ENCODE measurements at regions of chr11 and their contacts with region 1.

Region 1: GRCh38 chr11:67126986-67127385 is 7.9 kb downstream of the KDM2A start:
- DNase-seq: no peak
- H3K4me3 ChIP-seq: no peak overlapping the region
- H3K27ac ChIP-seq: no peak overlapping the region
- H3K4me1 ChIP-seq: peaks cover 21% of the 10 kb centered on the region
- H3K27me3 ChIP-seq: no peaks in the 10 kb centered on the region
- CTCF ChIP-seq: no peak

Region 2: DNA sequence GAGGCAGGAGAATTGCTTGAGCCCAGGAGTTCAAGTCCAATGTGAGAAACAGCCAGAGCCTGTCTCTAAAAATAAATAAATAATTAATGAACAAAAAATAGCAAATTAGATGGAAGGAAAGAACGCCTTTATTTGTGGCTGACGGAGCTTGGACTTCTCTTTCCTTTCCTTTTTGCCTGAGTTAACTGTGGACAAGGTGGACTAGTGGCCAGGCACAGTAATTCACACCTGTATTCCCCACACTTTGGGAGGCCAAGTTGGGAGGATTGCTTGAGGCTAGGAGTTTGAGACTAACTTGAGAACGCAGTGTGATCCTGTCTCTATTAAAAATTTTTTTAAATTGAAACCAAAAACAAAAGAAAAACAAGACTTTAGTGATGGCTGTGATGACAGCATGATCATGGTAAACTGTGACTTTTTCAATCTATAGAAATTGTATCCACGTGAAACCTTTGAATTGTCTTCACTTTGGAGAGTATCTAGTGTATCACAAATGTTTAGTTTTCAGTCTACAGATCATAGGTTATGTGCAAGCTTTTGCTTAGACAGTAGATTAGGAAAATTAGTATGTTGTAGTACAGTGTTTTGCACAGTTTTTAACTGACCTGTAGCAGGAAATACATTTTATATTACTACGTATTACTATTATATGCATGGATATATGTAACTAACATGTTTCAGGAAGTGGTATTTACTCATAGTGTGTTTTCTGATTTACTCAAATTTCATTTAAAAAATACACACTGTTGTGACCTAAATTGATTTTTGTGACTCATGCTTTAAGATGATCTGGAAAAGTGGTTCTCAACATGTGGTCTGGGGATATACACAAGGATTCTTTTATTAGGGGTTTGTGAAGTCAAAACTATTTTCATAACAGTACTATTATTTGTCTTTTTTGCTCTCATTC is 34.1 kb after region 1 on chr11:
- CTCF ChIA-PET with region 1: interaction called, 23 read pairs
- POLR2A ChIA-PET with region 1: interaction called, 20 read pairs
- intact Hi-C with region 1: no loop called
- DNase-seq: no peak
- H3K4me3 ChIP-seq: no peak overlapping the region
- H3K27ac ChIP-seq: peak overlapping the region; percentile 18; the same call in 1 of the 2 replicates
- H3K4me1 ChIP-seq: peaks cover 21% of the 10 kb centered on the region
- H3K27me3 ChIP-seq: no peaks in the 10 kb centered on the region
- CTCF ChIP-seq: no peak

Region 3: DNA sequence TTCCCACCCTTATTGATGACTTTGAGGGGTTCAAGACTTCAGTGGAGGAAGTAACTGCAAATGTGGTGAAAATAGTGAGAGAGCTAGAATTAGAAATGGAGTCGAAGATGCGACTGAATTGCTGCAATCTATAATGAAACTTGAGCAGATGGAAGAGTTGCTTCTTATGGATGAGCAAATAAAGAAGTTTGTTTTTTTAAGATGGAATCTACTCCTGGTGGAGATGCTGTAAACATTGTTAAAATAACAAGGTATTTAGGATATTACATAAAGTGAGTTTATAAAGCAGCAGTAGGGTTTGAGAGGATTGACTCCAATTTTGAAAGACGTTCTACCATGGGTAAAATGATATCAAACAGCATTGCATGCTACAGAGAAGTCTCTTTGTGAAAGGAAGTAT is 75.1 kb after region 1 on chr11:
- CTCF ChIA-PET with region 1: no interaction called
- POLR2A ChIA-PET with region 1: interaction called, 16 read pairs
- intact Hi-C with region 1: no loop called
- DNase-seq: no peak
- H3K4me3 ChIP-seq: no peak overlapping the region
- H3K27ac ChIP-seq: no peak overlapping the region
- H3K4me1 ChIP-seq: peaks cover 5% of the 10 kb centered on the region; the same call in 1 of the 2 replicates
- H3K27me3 ChIP-seq: no peaks in the 10 kb centered on the region
- CTCF ChIP-seq: no peak

Measured in PC-9 (cell line).